Heart right ventricle (tissue), 16 donors: ENCODE measurements at regions of chr5 and their contacts with region 1.

Region 1: GRCh38 chr5:155136216-155136850 is 122.8 kb downstream of the KIF4B start:
- DNase-seq: no peak
- ATAC-seq: peak in 2 of 8 donors; percentile 59
- H3K4me3 ChIP-seq: no peak overlapping the region
- H3K27ac ChIP-seq: no peak overlapping the region
- H3K4me1 ChIP-seq: peaks cover 0 to 20% (median 6%) of the 10 kb centered on the region in 9 donors
- H3K27me3 ChIP-seq: peaks cover 0 to 4% (median 0%) of the 10 kb centered on the region in 7 donors
- CTCF ChIP-seq: no peak

Region 2: DNA sequence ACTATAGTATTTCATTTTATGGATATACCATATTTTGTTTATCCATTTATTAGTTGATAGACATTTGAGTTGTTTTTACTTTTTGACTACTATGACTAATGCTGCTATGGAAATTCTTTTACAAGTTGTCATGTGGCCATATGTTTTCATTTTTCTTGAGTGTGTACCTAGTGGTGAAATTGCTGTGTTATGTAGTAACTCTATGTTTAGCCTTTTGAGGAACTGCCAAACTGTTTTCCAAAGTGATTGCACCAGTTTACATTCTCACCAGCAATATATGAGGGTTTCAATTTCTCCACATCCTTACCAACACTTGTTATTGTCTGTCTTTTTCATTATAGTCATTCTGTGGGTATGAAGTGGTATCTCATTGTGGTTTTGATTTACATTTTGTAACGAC is 1570.5 kb before region 1 on chr5:
- intact Hi-C with region 1: no loop called
- DNase-seq: no peak
- ATAC-seq: no peak
- H3K4me3 ChIP-seq: no peak overlapping the region
- H3K27ac ChIP-seq: no peak overlapping the region
- H3K4me1 ChIP-seq: peaks cover 0 to 4% (median 0%) of the 10 kb centered on the region in 9 donors
- H3K27me3 ChIP-seq: no peaks in the 10 kb centered on the region
- CTCF ChIP-seq: no peak

Region 3: GRCh38 chr5:153926201-153926600 is 1210.1 kb before region 1 on chr5:
- intact Hi-C with region 1: no loop called
- DNase-seq: no peak
- ATAC-seq: no peak
- H3K4me3 ChIP-seq: no peak overlapping the region
- H3K27ac ChIP-seq: no peak overlapping the region
- H3K4me1 ChIP-seq: no peaks in the 10 kb centered on the region
- H3K27me3 ChIP-seq: no peaks in the 10 kb centered on the region
- CTCF ChIP-seq: no peak

Region 4: DNA sequence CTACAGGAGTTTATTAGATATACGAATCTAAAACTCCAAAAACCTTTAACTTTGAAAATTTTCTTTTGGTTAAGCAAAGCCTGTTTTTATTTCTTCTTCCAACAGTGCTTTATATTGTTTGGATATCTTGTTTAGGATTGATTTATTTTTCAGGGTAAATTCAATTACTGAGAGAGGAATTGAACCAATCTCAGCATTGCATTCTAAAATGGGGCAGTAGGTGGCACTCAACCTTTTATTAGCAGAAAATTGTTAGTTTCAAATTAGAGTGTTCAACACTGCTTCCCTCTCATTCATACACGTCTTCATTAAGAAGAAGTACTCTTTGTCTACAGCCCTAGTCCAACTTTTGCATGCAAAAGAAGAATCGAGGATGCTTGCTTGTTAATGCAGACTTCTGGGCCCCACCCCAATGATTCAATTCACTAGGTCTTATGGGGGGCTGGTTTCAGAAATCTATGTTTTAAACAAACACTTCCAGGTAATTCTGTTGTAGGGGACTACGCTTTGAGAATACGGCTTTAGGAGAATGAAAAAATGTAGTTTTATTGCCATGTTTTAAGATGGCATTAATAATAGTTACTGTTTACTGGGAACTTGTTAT is 168.8 kb before region 1 on chr5:
- intact Hi-C with region 1: loop called in 7 of 10 experiments (anchors 5 to 10 kb)
- DNase-seq: peak in 1 of 2 donors; percentile 16
- ATAC-seq: peak in 2 of 8 donors; percentile 31 to 62
- H3K4me3 ChIP-seq: peak overlapping the region in 2 of 10 donors; percentile 10 to 19
- H3K27ac ChIP-seq: peak overlapping the region in 2 of 10 donors; percentile 59 to 76
- H3K4me1 ChIP-seq: peaks cover 0 to 32% (median 14%) of the 10 kb centered on the region in 9 donors
- H3K27me3 ChIP-seq: no peaks in the 10 kb centered on the region
- CTCF ChIP-seq: peak; percentile 18 to 69 (median 54)

Region 5: GRCh38 chr5:154972476-154973080 is 163.8 kb before region 1 on chr5:
- intact Hi-C with region 1: loop called in 7 of 10 experiments (anchors 5 to 10 kb)
- DNase-seq: peak in 1 of 2 donors; percentile 24
- ATAC-seq: peak in 5 of 8 donors; percentile 51 to 76 (median 74)
- H3K4me3 ChIP-seq: no peak overlapping the region
- H3K27ac ChIP-seq: no peak overlapping the region
- H3K4me1 ChIP-seq: peaks cover 0 to 12% (median 0%) of the 10 kb centered on the region in 9 donors
- H3K27me3 ChIP-seq: no peaks in the 10 kb centered on the region
- CTCF ChIP-seq: peak; percentile 38 to 74 (median 63)

Region 6: GRCh38 chr5:155189981-155190380 is 53.6 kb after region 1 on chr5:
- intact Hi-C with region 1: loop called in 1 of 10 experiments (anchors 5 kb)
- DNase-seq: no peak
- ATAC-seq: no peak
- H3K4me3 ChIP-seq: no peak overlapping the region
- H3K27ac ChIP-seq: no peak overlapping the region
- H3K4me1 ChIP-seq: peaks cover 0 to 13% (median 5%) of the 10 kb centered on the region in 9 donors
- H3K27me3 ChIP-seq: no peaks in the 10 kb centered on the region
- CTCF ChIP-seq: no peak

Region 7: GRCh38 chr5:155485386-155485785 is 349.1 kb after region 1 on chr5:
- intact Hi-C with region 1: loop called in 2 of 10 experiments (anchors 5 to 10 kb)
- DNase-seq: no peak
- ATAC-seq: no peak
- H3K4me3 ChIP-seq: no peak overlapping the region
- H3K27ac ChIP-seq: peak overlapping the region in 2 of 10 donors; percentile 7 to 20
- H3K4me1 ChIP-seq: peaks cover 0 to 15% (median 0%) of the 10 kb centered on the region in 9 donors
- H3K27me3 ChIP-seq: no peaks in the 10 kb centered on the region
- CTCF ChIP-seq: no peak

Region 8: DNA sequence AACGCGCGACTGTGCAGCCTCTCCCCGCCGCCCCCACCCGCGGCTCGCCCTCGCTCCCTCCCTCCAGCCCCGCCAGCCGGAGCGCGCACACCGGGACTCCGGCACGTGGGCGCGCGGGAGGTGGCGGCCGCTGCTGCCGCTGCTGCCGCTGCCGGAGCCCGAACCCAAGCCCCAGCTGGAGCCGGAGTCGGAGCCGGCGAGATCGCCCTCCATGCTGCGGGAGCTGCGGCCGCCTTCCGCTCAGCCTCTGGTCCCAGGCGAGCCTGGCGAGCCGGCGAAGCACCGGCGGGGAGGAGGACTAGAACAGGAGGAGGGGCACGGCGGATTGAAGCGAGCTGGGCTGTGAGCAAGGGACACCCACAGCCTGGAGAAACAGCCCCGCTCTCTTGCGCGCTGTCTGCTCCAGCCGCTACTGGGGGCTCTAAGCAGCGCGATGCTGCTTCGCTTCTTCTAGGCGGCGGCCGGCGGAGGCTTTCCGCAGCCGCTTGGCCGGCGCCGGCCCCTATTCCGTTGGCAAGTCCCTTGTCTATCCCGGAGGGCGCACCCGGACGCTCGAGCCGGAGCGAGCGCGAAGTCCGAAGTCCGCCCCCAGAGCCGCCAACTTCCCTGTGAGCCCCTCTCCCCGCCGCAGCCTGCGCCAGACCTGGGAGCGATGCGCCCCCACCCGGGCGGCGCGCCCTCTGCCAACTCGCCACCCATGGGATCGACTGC is 592.0 kb after region 1 on chr5:
- intact Hi-C with region 1: loop called in 5 of 10 experiments (anchors 2 to 10 kb)
- DNase-seq: peak; percentile 47 to 68
- ATAC-seq: peak; percentile 17 to 86 (median 76)
- H3K4me3 ChIP-seq: peak overlapping the region; percentile 39 to 64 (median 56)
- H3K27ac ChIP-seq: peak overlapping the region; percentile 50 to 91 (median 83)
- H3K4me1 ChIP-seq: peaks cover 0 to 40% (median 5%) of the 10 kb centered on the region in 9 donors
- H3K27me3 ChIP-seq: peaks cover 0 to 71% (median 33%) of the 10 kb centered on the region in 7 donors
- CTCF ChIP-seq: peak in 4 of 9 donors; percentile 24 to 43 (median 37)

Region 9: GRCh38 chr5:156934450-156935211 is 1798.3 kb after region 1 on chr5:
- intact Hi-C with region 1: loop called in 1 of 10 experiments (anchors 10 kb)
- DNase-seq: peak in 1 of 2 donors; percentile 4
- ATAC-seq: no peak
- H3K4me3 ChIP-seq: no peak overlapping the region
- H3K27ac ChIP-seq: no peak overlapping the region
- H3K4me1 ChIP-seq: no peaks in the 10 kb centered on the region
- H3K27me3 ChIP-seq: no peaks in the 10 kb centered on the region
- CTCF ChIP-seq: peak; percentile 18 to 64 (median 51)